MCF 10A (cell line): ENCODE measurements at regions of chr2 and their contacts with region 1.

Region 1: DNA sequence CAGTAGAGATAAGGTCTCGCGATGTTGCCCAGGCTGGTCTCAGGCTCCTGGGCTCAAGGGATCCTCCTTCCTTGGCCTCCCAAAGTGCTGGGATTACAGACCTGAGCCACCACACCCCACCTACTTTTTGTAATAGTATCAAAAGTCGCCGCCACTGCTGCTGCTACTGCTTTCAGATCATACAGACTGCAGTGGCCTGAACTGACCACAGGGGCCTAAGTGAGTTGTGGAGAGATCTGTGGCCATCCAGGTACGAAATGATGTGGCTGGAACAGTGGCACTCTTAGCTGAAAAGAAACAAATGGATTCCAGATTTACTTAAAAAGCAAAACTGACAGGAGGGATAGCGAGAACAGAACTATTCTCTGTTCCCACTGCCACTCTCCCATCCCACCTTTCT is 32.9 kb upstream of the POMC start:
- DNase-seq: peak; percentile 5
- H3K4me3 Mint-ChIP-seq: no peak overlapping the region
- H3K27ac Mint-ChIP-seq: no peak overlapping the region
- H3K4me1 Mint-ChIP-seq: no peaks in the 10 kb centered on the region
- H3K27me3 Mint-ChIP-seq: peaks cover 15% of the 10 kb centered on the region
- CTCF ChIP-seq: no peak

Region 2: GRCh38 chr2:24409700-24410556 is 791.3 kb before region 1 on chr2:
- CTCF ChIA-PET with region 1: interaction called, 3 read pairs
- POLR2A ChIA-PET with region 1: no interaction called
- intact Hi-C with region 1: loop called (anchors 1 kb)
- DNase-seq: peak; percentile 77
- H3K4me3 Mint-ChIP-seq: no peak overlapping the region
- H3K27ac Mint-ChIP-seq: no peak overlapping the region
- H3K4me1 Mint-ChIP-seq: no peaks in the 10 kb centered on the region
- H3K27me3 Mint-ChIP-seq: no peaks in the 10 kb centered on the region
- CTCF ChIP-seq: peak; percentile 67

Region 3: DNA sequence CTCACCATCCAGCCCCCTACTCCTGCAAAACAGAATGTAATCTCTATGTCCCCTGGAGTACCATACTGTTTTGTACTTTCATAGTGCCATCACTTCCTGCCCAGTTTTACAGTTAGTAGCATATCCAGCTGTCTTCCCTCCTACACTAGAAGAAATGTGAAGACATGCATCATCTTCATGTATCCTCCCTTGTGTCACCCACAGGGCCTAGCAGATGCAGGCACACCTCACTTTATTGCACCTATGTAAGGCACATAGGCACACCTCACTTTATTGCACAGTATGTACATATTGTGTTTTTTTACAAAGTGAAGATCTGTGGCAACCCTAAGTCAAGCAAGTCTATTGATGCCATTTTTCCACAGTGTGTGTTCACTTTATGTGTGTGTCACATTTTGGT is 241.5 kb before region 1 on chr2:
- CTCF ChIA-PET with region 1: no interaction called
- POLR2A ChIA-PET with region 1: no interaction called
- intact Hi-C with region 1: no loop called
- DNase-seq: no peak
- H3K4me3 Mint-ChIP-seq: no peak overlapping the region
- H3K27ac Mint-ChIP-seq: no peak overlapping the region
- H3K4me1 Mint-ChIP-seq: peaks cover 8% of the 10 kb centered on the region
- H3K27me3 Mint-ChIP-seq: no peaks in the 10 kb centered on the region
- CTCF ChIP-seq: no peak

Region 4: GRCh38 chr2:24971536-24972314 is 229.5 kb before region 1 on chr2 and contains the start of gene DNAJC27:
- CTCF ChIA-PET with region 1: interaction called, 16 read pairs
- POLR2A ChIA-PET with region 1: no interaction called
- intact Hi-C with region 1: loop called (anchors 1 kb)
- DNase-seq: peak; percentile 97
- H3K4me3 Mint-ChIP-seq: peak within 1 kb of the TSS; percentile 94
- H3K27ac Mint-ChIP-seq: peak within 1 kb of the TSS; percentile 100
- H3K4me1 Mint-ChIP-seq: no peaks in the 10 kb centered on the region
- H3K27me3 Mint-ChIP-seq: no peaks in the 10 kb centered on the region
- CTCF ChIP-seq: no peak
- total RNA-seq, gene DNAJC27: 5.8 and 7.1 TPM in 2 replicates

Region 5: GRCh38 chr2:25131567-25132298 is 69.5 kb before region 1 on chr2:
- CTCF ChIA-PET with region 1: interaction called, 3 read pairs
- POLR2A ChIA-PET with region 1: no interaction called
- intact Hi-C with region 1: loop called (anchors 1 kb)
- DNase-seq: no peak
- H3K4me3 Mint-ChIP-seq: no peak overlapping the region
- H3K27ac Mint-ChIP-seq: no peak overlapping the region
- H3K4me1 Mint-ChIP-seq: no peaks in the 10 kb centered on the region
- H3K27me3 Mint-ChIP-seq: peaks cover 67% of the 10 kb centered on the region
- CTCF ChIP-seq: no peak

Region 6: DNA sequence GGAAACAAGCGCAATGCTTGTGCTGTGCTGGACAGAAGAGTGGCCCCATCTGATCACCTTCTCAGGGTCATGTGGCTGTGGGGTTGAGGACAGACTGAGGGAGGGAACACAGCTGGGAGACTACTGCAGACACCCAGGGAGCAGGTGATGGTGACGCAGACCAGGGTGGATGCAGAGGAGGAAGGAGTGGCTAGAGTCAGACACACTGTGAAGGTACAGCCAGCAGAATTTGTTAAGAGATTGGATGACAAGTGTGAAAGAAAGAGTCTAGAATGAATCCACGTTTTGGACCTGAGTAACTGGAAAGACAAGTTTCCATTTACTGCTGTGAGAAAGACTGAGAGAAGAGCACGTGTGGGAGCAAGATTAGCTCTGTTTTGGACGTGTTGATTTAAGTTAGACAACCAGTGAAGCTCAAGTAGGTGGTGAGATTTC is 17.0 kb before region 1 on chr2:
- CTCF ChIA-PET with region 1: interaction called, 34 read pairs
- POLR2A ChIA-PET with region 1: no interaction called
- intact Hi-C with region 1: no loop called
- DNase-seq: no peak
- H3K4me3 Mint-ChIP-seq: no peak overlapping the region
- H3K27ac Mint-ChIP-seq: no peak overlapping the region
- H3K4me1 Mint-ChIP-seq: no peaks in the 10 kb centered on the region
- H3K27me3 Mint-ChIP-seq: peaks cover 13% of the 10 kb centered on the region
- CTCF ChIP-seq: no peak

Region 7: DNA sequence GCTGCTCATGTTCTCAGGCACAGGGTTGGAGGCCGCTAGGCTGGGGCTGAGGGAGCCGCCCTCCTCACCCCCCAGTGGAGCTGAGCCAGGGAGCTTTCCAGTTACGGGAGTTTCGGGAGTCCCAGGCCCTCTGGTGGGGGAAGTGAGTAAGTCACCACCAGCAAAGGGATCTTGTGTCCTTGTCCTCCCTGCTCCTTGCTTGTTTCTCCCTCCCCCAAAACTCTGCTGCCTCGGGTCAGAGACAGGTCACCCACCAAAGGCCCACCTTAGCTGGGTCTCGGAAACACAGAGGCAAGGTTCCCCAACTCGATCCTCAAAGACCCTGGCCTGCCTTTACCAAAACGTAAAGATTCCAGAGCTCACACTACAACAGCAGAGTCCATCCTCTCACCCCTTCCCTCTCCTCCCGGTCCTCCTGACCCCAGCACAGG is 27.6 kb after region 1 on chr2:
- CTCF ChIA-PET with region 1: interaction called, 16 read pairs
- POLR2A ChIA-PET with region 1: no interaction called
- intact Hi-C with region 1: no loop called
- DNase-seq: peak; percentile 81
- H3K4me3 Mint-ChIP-seq: no peak overlapping the region
- H3K27ac Mint-ChIP-seq: no peak overlapping the region
- H3K4me1 Mint-ChIP-seq: no peaks in the 10 kb centered on the region
- H3K27me3 Mint-ChIP-seq: no peaks in the 10 kb centered on the region
- CTCF ChIP-seq: peak; percentile 60

Region 8: GRCh38 chr2:25567406-25567805 is 366.1 kb after region 1 on chr2:
- CTCF ChIA-PET with region 1: no interaction called
- POLR2A ChIA-PET with region 1: no interaction called
- intact Hi-C with region 1: no loop called
- DNase-seq: peak; percentile 44
- H3K4me3 Mint-ChIP-seq: no peak overlapping the region
- H3K27ac Mint-ChIP-seq: no peak overlapping the region
- H3K4me1 Mint-ChIP-seq: no peaks in the 10 kb centered on the region
- H3K27me3 Mint-ChIP-seq: no peaks in the 10 kb centered on the region
- CTCF ChIP-seq: peak; percentile 40